IMR-90 (cell line): ENCODE measurements at regions of chr6 and their contacts with region 1.

Region 1: GRCh38 chr6:8063761-8064637 is at the start of gene BLOC1S5:
- DNase-seq: peak; percentile 97
- ATAC-seq: peak; percentile 95
- H3K4me3 ChIP-seq: peak within 1 kb of the TSS; percentile 82
- H3K27ac ChIP-seq: peak within 1 kb of the TSS; percentile 80
- H3K4me1 ChIP-seq: no peaks in the 10 kb centered on the region
- H3K27me3 ChIP-seq: no peaks in the 10 kb centered on the region
- CTCF ChIP-seq: 0 out of 2 replicates have a peak, but pooled peaks have one; percentile 6
- POLR2A ChIP-seq: peak; percentile 75
- RAD21 ChIP-seq: peak; percentile 2; the same call in 1 of the 2 replicates
- total RNA-seq, gene BLOC1S5: 17.2 and 18.3 TPM in 2 replicates

Region 2: DNA sequence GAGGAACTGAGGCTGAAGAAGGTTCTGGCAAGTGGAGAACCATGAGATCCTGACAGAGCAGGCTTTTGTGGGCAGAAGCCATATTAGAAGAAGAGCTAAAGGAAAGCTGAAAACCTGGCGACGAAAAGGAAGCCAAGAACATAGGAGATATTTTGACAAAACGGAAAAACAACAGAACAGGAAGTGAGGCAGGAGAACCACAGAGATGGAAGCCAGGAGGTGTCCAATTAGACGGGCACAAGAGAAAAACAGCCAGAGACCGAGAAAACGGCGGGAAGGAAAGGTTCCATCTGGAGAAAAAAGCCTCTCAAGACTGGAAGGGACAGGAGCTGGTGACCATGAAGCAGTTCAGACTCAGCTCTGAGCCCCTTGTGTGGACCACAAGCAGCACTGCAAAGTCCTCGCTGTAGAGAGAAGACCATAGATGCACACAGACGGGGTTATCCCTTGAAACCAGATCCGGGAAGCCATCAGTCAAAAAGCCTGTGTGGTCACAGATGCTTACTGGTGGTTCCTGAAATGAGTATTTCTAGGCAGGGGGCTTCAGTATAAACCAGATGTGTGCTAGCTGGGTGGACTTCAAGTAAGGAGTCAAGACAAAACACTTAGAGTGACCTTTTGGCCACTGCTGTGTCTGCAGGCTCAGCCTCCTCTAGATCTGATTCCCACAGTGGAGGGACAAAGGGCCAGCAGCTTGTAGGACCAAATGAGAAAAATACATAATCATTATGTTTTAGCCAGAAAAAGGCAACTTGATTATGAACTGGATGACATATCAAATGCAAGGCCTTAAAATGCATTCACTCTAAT is 781.7 kb before region 1 on chr6:
- CTCF ChIA-PET with region 1: no interaction called
- POLR2A ChIA-PET with region 1: no interaction called
- dilution Hi-C with region 1: no loop called
- in situ Hi-C with region 1: loop called (anchors 25 kb)
- intact Hi-C with region 1: no loop called
- DNase-seq: no peak
- ATAC-seq: no peak
- H3K4me3 ChIP-seq: no peak overlapping the region
- H3K27ac ChIP-seq: no peak overlapping the region
- H3K4me1 ChIP-seq: no peaks in the 10 kb centered on the region
- H3K27me3 ChIP-seq: no peaks in the 10 kb centered on the region
- CTCF ChIP-seq: no peak
- POLR2A ChIP-seq: no peak
- RAD21 ChIP-seq: no peak

Region 3: GRCh38 chr6:7615611-7616383 is 448.2 kb before region 1 on chr6:
- CTCF ChIA-PET with region 1: no interaction called
- POLR2A ChIA-PET with region 1: no interaction called
- dilution Hi-C with region 1: no loop called
- in situ Hi-C with region 1: no loop called
- intact Hi-C with region 1: loop called (anchors 5 kb)
- DNase-seq: peak; percentile 65
- ATAC-seq: peak; percentile 66
- H3K4me3 ChIP-seq: peak overlapping the region; percentile 13; the same call in 1 of the 2 replicates
- H3K27ac ChIP-seq: no peak overlapping the region
- H3K4me1 ChIP-seq: peaks cover 4% of the 10 kb centered on the region; the same call in 1 of the 2 replicates
- H3K27me3 ChIP-seq: 0 out of 2 replicates have a peak, but pooled peaks cover 1% of the 10 kb centered on the region
- CTCF ChIP-seq: peak; percentile 82
- POLR2A ChIP-seq: no peak
- RAD21 ChIP-seq: peak; percentile 80

Region 4: DNA sequence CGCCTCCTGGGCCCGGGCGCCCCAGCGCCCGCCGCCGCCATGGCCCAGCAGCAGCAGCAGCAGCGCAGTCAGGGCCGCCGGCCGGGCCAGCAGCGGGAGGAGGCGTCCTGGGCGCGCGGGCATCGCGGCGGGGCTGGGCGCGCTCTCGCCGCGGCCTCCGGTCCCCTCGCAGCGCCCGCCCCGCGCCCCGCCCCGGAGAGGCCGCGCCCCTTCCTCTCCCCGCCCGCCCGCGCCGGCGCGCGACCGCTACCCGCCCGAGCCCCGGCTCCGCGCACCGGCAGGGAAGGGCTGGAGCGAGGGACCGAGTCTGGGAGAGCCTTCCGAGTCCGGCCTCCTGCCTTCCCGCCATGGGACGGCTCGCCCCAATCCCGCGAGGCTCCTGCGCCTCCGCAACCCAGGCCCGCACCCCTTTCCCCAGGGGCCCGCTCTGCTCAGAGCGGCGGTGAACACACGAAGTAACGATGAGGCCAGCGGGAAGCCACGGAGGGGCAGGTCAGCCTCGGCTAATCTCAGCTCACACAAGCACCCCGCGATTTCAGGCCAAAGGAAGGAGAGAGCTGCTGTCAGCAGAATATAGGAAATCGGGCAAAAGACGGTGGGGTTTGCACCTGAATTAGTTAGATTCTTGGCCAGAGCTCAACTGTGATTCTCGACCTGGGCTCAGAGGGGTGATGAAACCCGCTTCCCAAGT is 153.2 kb before region 1 on chr6 and contains the start of gene TXNDC5:
- CTCF ChIA-PET with region 1: interaction called, 4 read pairs
- POLR2A ChIA-PET with region 1: no interaction called
- dilution Hi-C with region 1: no loop called
- in situ Hi-C with region 1: loop called (anchors 5 kb)
- intact Hi-C with region 1: loop called (anchors 2 kb)
- DNase-seq: peak; percentile 62
- ATAC-seq: peak; percentile 94
- H3K4me3 ChIP-seq: peak within 1 kb of the TSS; percentile 96
- H3K27ac ChIP-seq: peak within 1 kb of the TSS; percentile 81
- H3K4me1 ChIP-seq: peaks cover 6% of the 10 kb centered on the region; the same call in 1 of the 2 replicates
- H3K27me3 ChIP-seq: peaks cover 29% of the 10 kb centered on the region
- CTCF ChIP-seq: no peak
- POLR2A ChIP-seq: no peak
- RAD21 ChIP-seq: no peak
- total RNA-seq, gene TXNDC5: 418 and 439 TPM in 2 replicates

Region 5: GRCh38 chr6:8006208-8006607 is 57.8 kb before region 1 on chr6:
- CTCF ChIA-PET with region 1: no interaction called
- POLR2A ChIA-PET with region 1: no interaction called
- dilution Hi-C with region 1: no loop called
- in situ Hi-C with region 1: no loop called
- intact Hi-C with region 1: loop called (anchors 5 kb)
- DNase-seq: peak; percentile 51
- ATAC-seq: peak; percentile 68; the same call in 1 of the 2 replicates
- H3K4me3 ChIP-seq: no peak overlapping the region
- H3K27ac ChIP-seq: no peak overlapping the region
- H3K4me1 ChIP-seq: no peaks in the 10 kb centered on the region
- H3K27me3 ChIP-seq: no peaks in the 10 kb centered on the region
- CTCF ChIP-seq: peak; percentile 66
- POLR2A ChIP-seq: no peak
- RAD21 ChIP-seq: peak; percentile 75

Region 6: GRCh38 chr6:8219352-8219943 is 155.4 kb after region 1 on chr6:
- CTCF ChIA-PET with region 1: no interaction called
- POLR2A ChIA-PET with region 1: no interaction called
- dilution Hi-C with region 1: no loop called
- in situ Hi-C with region 1: no loop called
- intact Hi-C with region 1: loop called (anchors 1 kb)
- DNase-seq: peak; percentile 63
- ATAC-seq: peak; percentile 79
- H3K4me3 ChIP-seq: no peak overlapping the region
- H3K27ac ChIP-seq: no peak overlapping the region
- H3K4me1 ChIP-seq: no peaks in the 10 kb centered on the region
- H3K27me3 ChIP-seq: peaks cover 2% of the 10 kb centered on the region; the same call in 1 of the 2 replicates
- CTCF ChIP-seq: peak; percentile 82
- POLR2A ChIP-seq: no peak
- RAD21 ChIP-seq: peak; percentile 89